Right cardiac atrium (tissue), 5 donors: ENCODE measurements at regions of chr9 and their contacts with region 1.

Region 1: DNA sequence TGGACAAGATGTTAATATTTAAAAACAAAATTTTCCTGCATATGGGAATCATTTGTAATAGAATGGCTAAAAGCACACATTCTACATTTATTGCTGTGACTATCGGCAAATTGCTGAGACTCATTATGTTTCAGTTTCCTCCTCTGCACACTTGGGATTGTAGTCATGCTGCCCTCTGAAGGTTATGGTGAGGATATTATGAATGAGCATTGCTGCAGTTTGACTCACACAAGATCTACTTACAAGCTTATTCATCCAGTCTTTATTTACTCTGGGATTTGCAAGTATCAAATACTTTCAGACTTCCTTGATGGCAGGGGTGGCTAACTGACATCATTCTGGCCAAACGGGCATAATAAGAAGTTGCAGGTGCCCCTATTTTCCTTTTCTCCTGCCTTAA is 9.5 kb upstream of the NFIL3 start:
- DNase-seq: no peak
- ATAC-seq: peak; percentile 70 to 74
- H3K4me3 ChIP-seq: no peak overlapping the region
- H3K27ac ChIP-seq: no peak overlapping the region
- H3K4me1 ChIP-seq: no peaks in the 10 kb centered on the region
- H3K27me3 ChIP-seq: no peaks in the 10 kb centered on the region

Region 2: GRCh38 chr9:90914868-90915483 is 518.2 kb before region 1 on chr9:
- intact Hi-C with region 1: loop called in 3 of 4 experiments (anchors 5 to 10 kb)
- DNase-seq: peak; percentile 63 to 87 (median 80)
- ATAC-seq: peak; percentile 81 to 90
- H3K4me3 ChIP-seq: no peak overlapping the region
- H3K27ac ChIP-seq: no peak overlapping the region
- H3K4me1 ChIP-seq: peaks cover 4% of the 10 kb centered on the region
- H3K27me3 ChIP-seq: no peaks in the 10 kb centered on the region

Region 3: DNA sequence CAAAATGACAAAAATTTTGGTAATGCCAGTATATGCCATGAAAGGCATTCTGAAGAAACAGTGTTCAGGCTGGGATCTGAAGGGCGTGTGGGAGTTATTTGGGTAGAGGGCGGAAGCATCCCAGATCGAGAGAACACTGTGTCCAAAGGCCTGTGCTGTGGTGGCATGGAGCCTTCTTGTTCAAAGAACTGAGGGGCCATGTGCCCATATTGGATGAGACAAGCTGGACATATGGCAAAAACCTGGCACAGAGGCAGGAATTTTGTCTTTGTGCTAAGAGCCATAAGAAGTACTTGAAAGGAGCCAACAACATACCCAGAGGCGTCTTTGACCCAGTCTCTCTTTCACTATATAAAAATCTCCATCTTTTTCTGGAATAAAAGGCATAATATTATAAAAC is 503.6 kb before region 1 on chr9:
- intact Hi-C with region 1: loop called in 1 of 4 experiments (anchors 10 kb)
- DNase-seq: no peak
- ATAC-seq: no peak
- H3K4me3 ChIP-seq: no peak overlapping the region
- H3K27ac ChIP-seq: no peak overlapping the region
- H3K4me1 ChIP-seq: peaks cover 2% of the 10 kb centered on the region
- H3K27me3 ChIP-seq: peaks cover 2% of the 10 kb centered on the region

Region 4: DNA sequence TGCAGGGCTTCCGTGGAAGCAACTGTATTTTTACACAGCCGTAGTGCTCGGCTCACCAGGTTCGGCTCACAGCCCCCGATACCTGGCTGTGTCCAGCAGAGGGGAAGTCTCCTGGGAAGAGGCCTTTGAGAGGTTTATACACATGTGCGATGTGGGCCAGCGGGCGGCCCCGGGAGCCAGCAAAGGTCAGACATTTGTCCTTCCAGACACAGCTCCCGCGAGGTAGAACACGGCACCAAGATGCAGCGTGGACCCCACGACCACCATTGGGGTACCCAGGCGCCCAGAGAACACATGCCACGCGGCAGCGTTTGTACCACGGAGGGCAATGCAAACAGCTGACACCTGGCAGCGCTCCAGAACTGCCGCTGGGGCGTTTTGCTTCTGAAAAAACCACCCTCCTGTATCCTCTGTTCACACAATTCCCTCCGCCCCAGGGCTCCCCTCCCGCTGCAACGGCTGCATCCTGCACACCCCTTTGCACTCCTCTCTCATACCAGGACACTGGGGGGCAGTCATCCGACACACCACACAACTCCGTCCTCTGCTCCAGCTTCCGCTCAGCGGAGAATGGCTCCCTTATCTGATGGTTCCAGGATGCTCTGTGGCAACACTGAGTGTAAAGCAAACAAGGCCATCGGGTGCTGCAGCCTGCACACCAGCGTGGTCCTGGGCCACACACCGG is 396.2 kb before region 1 on chr9:
- intact Hi-C with region 1: loop called in 3 of 4 experiments (anchors 5 to 10 kb)
- DNase-seq: peak; percentile 83 to 86 (median 85)
- ATAC-seq: peak; percentile 97 to 98
- H3K4me3 ChIP-seq: no peak overlapping the region
- H3K27ac ChIP-seq: no peak overlapping the region
- H3K4me1 ChIP-seq: no peaks in the 10 kb centered on the region
- H3K27me3 ChIP-seq: no peaks in the 10 kb centered on the region

Region 5: GRCh38 chr9:91089405-91090129 is 343.6 kb before region 1 on chr9:
- intact Hi-C with region 1: loop called in 2 of 4 experiments (anchors 5 to 10 kb)
- DNase-seq: peak in 1 of 3 donors; percentile 58
- ATAC-seq: peak; percentile 59 to 62
- H3K4me3 ChIP-seq: no peak overlapping the region
- H3K27ac ChIP-seq: no peak overlapping the region
- H3K4me1 ChIP-seq: no peaks in the 10 kb centered on the region
- H3K27me3 ChIP-seq: no peaks in the 10 kb centered on the region

Region 6: GRCh38 chr9:91116211-91116610 is 317.0 kb before region 1 on chr9:
- intact Hi-C with region 1: no loop called
- DNase-seq: no peak
- ATAC-seq: no peak
- H3K4me3 ChIP-seq: no peak overlapping the region
- H3K27ac ChIP-seq: peak overlapping the region; percentile 25
- H3K4me1 ChIP-seq: no peaks in the 10 kb centered on the region
- H3K27me3 ChIP-seq: no peaks in the 10 kb centered on the region

Region 7: DNA sequence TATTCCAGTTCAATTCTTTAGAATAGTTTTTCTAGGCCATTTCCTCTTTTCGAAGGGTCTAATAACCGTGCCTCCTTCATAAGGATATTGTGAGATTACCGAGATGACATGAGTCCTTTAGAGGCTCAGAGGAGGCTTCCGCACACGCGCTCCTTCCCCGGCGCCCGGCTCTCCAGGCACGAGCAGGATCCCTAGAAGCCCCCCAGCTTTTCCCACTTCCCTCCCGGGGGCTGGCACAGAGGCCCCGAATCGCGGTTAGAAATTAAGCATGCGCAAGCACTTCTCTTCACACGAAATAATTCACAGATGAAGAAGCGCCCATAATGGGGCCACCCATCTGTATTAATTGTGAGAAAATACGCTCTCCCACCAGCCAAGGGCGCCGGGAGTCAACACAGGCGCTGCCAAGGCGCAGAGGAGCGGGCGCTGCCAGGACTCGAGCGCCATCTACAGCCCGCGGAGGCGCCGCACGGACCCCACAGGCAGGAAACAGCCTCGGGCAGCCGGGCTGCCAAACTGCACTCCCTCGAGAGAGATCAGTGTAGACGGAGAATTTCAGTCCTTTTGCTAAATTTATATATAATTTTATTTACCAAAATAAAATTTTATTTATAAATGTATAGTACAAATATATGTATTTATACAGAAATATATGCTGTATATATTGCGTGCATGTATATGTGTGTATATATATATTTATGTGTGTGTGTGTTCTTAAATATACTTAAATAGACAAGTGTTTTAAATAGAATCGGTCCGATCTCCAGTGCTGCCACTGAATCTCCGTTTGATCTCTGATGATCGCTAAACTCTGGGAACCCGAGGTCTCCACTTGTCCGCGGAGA is 248.5 kb after region 1 on chr9:
- intact Hi-C with region 1: loop called in 1 of 4 experiments (anchors 10 kb)
- DNase-seq: peak; percentile 83 to 90 (median 89)
- ATAC-seq: peak; percentile 94 to 97
- H3K4me3 ChIP-seq: no peak overlapping the region
- H3K27ac ChIP-seq: no peak overlapping the region
- H3K4me1 ChIP-seq: no peaks in the 10 kb centered on the region
- H3K27me3 ChIP-seq: no peaks in the 10 kb centered on the region